ENCODE measurements at regions of chr19 and their contacts with region 1.

Region 1: DNA sequence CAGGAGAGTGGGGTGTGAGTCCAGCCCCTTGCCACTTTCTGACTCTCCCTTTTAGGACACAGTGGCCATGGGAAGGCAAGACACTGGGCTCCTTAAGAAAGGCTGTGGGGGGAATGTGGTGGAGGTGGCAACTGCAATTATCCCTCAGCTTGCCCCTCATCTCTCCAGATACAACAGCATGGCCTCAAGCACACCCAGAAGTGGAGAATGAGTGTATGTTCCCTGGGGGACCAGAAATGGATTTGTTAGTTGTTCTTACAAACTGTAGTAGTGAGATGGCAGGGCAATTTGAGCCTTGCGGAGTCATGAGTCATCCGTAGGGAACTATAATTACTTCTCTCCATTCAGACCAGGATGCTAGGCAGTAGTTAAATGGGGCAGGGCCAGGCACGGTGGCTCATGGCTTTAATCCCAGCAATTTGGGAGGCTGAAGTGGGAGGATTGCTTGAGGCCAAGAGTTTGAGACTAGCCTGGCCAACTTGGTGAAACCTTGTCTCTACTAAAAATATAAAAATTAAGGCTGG is 25.6 kb upstream of the CXCL17 start:
- DNase-seq: peak; percentile 74
- H3K4me3 ChIP-seq: no peak overlapping the region
- H3K27ac ChIP-seq: no peak overlapping the region
- H3K4me1 ChIP-seq: peaks cover 6% of the 10 kb centered on the region
- H3K27me3 ChIP-seq: no peaks in the 10 kb centered on the region
- CTCF ChIP-seq: no peak

Region 2: DNA sequence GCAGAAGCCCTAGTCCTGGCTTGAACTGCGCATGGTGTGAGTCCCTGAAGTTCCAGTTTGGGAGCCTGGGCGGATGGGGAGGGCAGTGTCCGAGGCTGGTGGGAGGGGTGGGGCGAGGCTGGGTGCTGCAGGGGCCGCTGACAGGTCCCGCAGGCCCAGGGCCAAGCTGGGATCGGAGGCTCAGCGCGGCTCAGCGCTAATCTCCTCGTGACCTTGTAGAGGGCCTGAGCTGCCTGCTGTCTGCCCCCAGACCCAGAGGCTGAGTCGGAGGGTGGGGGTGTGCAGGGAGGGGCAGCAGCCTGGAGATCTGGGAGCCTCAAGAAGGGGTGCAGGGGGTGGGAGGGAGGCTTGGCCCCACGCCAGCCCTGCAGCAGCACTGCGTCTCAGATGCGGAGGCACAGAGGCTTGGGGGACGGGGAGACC is 477.3 kb before region 1 on chr19:
- CTCF ChIA-PET with region 1: no interaction called
- dilution Hi-C with region 1: no loop called
- in situ Hi-C with region 1: no loop called
- intact Hi-C with region 1: no loop called
- DNase-seq: no peak
- H3K4me3 ChIP-seq: no peak overlapping the region
- H3K27ac ChIP-seq: no peak overlapping the region
- H3K4me1 ChIP-seq: peaks cover 6% of the 10 kb centered on the region
- H3K27me3 ChIP-seq: no peaks in the 10 kb centered on the region
- CTCF ChIP-seq: no peak

Region 3: GRCh38 chr19:42352301-42353259 is 115.8 kb before region 1 on chr19:
- CTCF ChIA-PET with region 1: no interaction called
- dilution Hi-C with region 1: no loop called
- in situ Hi-C with region 1: no loop called
- intact Hi-C with region 1: no loop called
- DNase-seq: peak; percentile 2
- H3K4me3 ChIP-seq: no peak overlapping the region
- H3K27ac ChIP-seq: no peak overlapping the region
- H3K4me1 ChIP-seq: peaks cover 5% of the 10 kb centered on the region
- H3K27me3 ChIP-seq: no peaks in the 10 kb centered on the region
- CTCF ChIP-seq: no peak

Region 4: GRCh38 chr19:42423462-42424344 is 44.6 kb before region 1 on chr19:
- CTCF ChIA-PET with region 1: no interaction called
- dilution Hi-C with region 1: loop called (anchors 5 kb)
- in situ Hi-C with region 1: no loop called
- intact Hi-C with region 1: no loop called
- DNase-seq: peak; percentile 86
- H3K4me3 ChIP-seq: peak overlapping the region; percentile 59 to 66 (median 63)
- H3K27ac ChIP-seq: peak overlapping the region; percentile 12
- H3K4me1 ChIP-seq: peaks cover 45% of the 10 kb centered on the region
- H3K27me3 ChIP-seq: no peaks in the 10 kb centered on the region
- CTCF ChIP-seq: no peak

Measured in mammary epithelial cell (primary cell).